Activated CD8-positive, alpha-beta T cell treated with anti-CD3 and anti-CD28 coated beads for 36 hours (primary cell): ENCODE measurements at regions of chr12 and their contacts with region 1.

Region 1: DNA sequence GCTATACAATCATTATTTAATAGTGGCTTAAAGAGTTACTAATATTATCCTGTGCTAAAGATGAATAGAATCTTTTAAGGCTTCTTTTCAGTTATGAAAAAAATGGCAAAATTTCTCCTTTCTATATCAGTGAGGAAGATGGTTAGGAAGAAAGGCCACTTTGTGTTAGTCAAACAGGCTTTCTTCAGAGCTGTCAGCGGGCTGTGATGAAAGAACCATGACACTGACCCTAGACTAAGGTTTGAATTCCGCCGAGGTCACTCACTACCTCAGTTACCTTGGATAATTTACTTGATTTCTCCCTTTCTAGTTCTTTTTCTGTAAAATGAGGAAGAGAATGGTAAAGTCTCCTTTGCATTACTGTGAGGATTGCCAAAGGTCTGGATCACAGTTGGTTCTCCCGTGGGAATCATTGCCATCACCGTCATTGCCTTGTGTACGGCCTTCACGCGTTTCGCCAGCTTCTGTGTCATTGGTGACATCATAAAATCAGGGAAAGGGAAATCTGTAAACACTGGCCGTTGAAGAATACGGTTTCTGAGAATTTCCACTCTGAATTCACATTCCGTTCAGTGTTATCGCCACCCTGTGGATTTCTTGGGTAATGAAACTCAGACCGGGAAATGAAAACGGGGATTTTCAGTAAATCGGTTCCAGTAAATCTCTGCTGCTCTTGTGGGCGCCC is 26.7 kb upstream of the YBX3 start:
- DNase-seq: peak; percentile 85
- ATAC-seq: peak; percentile 99
- H3K4me3 Mint-ChIP-seq: peak overlapping the region; percentile 67
- H3K27ac Mint-ChIP-seq: peak overlapping the region; percentile 22
- H3K4me1 Mint-ChIP-seq: peaks cover 8% of the 10 kb centered on the region
- H3K27me3 Mint-ChIP-seq: peaks cover 28% of the 10 kb centered on the region
- CTCF ChIP-seq: peak; percentile 95

Region 2: GRCh38 chr12:10613349-10614055 is 136.3 kb before region 1 on chr12 and contains the start of gene MAGOHB:
- CTCF ChIA-PET with region 1: interaction called, 11 read pairs
- POLR2A ChIA-PET with region 1: interaction called, 3 read pairs
- intact Hi-C with region 1: no loop called
- DNase-seq: peak; percentile 99
- ATAC-seq: peak; percentile 97
- H3K4me3 Mint-ChIP-seq: peak within 1 kb of the TSS; percentile 100
- H3K27ac Mint-ChIP-seq: peak within 1 kb of the TSS; percentile 100
- H3K4me1 Mint-ChIP-seq: peaks cover 30% of the 10 kb centered on the region
- H3K27me3 Mint-ChIP-seq: peaks cover 2% of the 10 kb centered on the region
- CTCF ChIP-seq: no peak
- total RNA-seq, gene MAGOHB: 80.4 to 85.6 TPM

Region 3: DNA sequence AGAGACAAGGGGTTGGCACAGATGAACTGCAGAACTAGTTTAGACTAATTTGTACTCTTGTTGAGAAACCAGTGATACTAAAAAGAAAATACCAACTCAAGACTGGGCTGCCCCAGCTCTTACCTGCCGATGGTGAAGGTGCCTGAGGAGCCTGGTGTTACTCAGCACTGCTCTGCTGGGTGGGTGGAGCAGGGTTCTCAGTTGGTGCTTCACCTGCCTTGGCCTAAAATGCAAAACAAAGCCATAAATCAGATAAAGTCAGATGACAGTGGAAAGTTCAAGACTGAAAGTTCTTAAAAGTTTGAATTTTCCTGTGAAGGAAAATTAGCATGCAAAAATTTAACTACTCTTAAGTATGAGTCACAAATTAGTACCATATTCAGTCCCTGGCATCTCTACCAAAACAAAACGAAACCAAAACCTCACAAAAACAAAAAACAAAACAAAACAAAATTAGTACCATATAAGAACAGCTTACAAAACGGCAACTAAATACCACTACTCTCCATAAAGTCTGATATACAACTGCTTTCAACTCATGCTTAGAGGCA is 48.6 kb before region 1 on chr12:
- CTCF ChIA-PET with region 1: interaction called, 19 read pairs
- POLR2A ChIA-PET with region 1: no interaction called
- intact Hi-C with region 1: no loop called
- DNase-seq: peak; percentile 55
- ATAC-seq: peak; percentile 91
- H3K4me3 Mint-ChIP-seq: no peak overlapping the region
- H3K27ac Mint-ChIP-seq: peak overlapping the region; percentile 91
- H3K4me1 Mint-ChIP-seq: peaks cover 16% of the 10 kb centered on the region
- H3K27me3 Mint-ChIP-seq: no peaks in the 10 kb centered on the region
- CTCF ChIP-seq: no peak

Region 4: DNA sequence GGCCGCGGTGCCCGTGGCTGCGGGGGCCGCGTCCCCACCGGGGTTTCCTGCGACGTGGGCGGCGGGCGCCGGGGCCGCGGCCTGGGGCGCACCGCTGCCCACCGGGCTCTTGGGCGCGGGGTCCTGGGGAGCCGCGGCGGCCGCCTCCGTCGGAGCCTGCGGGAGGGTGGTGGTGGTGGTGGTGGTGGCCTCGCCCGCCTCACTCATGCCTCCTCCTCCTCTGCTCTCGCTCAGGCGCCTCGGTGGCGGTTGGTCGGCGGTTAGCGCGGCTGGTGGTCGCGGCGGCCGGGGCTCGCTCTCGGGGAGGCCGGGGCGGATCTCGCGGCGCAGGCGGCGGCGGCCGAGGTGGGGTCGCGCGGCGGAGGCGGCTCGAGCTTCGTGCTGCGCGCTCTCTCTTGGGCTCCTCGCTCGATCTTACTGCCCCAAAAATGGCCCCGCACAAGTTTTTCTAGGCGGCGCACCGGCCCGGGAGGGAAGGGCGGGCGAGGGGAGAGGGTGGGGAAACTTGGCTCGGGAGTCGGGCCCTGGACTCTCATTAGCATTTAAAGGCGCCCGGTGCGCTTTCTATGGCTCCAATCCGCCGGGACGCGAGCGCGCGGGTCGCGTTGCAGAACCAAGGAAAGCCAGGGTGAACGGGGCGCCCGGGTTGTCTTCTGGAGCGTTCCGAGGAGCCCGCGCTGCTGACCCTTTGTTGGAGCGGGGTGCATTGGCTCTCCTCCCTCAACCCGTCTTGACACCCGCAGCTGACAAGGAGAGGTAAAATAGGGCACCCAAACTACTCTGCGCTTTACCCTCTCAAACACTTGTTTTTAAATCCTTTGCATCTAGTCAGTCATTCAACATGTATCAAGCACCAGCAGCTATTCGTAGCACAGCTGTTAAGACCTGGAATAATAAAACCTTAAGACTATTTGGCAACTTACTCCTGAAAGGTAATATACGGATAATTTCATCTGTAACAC is 26.7 kb before region 1 on chr12 and contains the start of gene YBX3:
- CTCF ChIA-PET with region 1: interaction called, 28 read pairs
- POLR2A ChIA-PET with region 1: interaction called, 8 read pairs
- intact Hi-C with region 1: no loop called
- DNase-seq: peak; percentile 73
- ATAC-seq: peak; percentile 32
- H3K4me3 Mint-ChIP-seq: peak within 1 kb of the TSS; percentile 98
- H3K27ac Mint-ChIP-seq: peak within 1 kb of the TSS; percentile 99
- H3K4me1 Mint-ChIP-seq: peaks cover 38% of the 10 kb centered on the region
- H3K27me3 Mint-ChIP-seq: peaks cover 26% of the 10 kb centered on the region
- CTCF ChIP-seq: no peak
- total RNA-seq, gene YBX3: 258 to 273 TPM

Region 5: DNA sequence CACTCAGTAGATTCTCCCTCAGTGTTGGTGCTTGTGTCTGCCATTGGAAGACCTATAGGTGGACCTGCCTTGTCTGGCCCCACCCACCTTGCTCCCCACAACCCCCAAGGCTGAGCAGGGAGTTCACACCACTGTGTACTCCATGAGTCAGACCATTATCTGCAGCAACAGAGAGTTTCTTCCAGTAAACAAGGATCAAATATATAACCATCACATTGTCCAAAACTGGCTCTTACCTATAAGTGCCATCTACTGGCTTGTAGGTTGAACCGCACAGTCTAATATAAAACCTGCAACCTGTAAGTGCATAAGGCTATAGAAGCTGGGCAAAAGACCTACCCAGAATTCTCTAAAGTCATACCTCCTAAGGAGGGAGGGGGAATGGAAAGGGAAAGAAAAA is 151.6 kb after region 1 on chr12:
- CTCF ChIA-PET with region 1: no interaction called
- POLR2A ChIA-PET with region 1: no interaction called
- intact Hi-C with region 1: no loop called
- DNase-seq: no peak
- ATAC-seq: no peak
- H3K4me3 Mint-ChIP-seq: no peak overlapping the region
- H3K27ac Mint-ChIP-seq: no peak overlapping the region
- H3K4me1 Mint-ChIP-seq: no peaks in the 10 kb centered on the region
- H3K27me3 Mint-ChIP-seq: no peaks in the 10 kb centered on the region
- CTCF ChIP-seq: no peak

Region 6: DNA sequence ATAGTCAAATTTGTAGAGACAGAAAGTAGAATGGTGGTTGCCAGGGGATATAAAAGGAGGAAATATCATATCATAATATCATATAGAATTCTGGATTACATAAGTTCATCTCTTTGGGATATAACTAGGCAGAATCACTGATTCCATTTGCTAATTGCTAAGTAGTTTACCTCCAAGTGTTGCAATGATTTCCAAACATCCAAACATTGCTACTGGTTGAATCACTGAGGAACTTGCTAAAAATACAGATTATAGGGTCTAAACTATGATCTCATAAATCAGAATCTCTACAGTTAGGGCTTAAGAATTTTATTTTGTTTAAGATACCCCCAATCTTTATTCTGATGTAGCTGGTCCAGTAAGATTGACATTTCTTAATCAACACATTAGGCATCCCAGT is 453.0 kb after region 1 on chr12:
- CTCF ChIA-PET with region 1: interaction called, 10 read pairs
- POLR2A ChIA-PET with region 1: no interaction called
- intact Hi-C with region 1: no loop called
- DNase-seq: no peak
- ATAC-seq: no peak
- H3K4me3 Mint-ChIP-seq: no peak overlapping the region
- H3K27ac Mint-ChIP-seq: no peak overlapping the region
- H3K4me1 Mint-ChIP-seq: no peaks in the 10 kb centered on the region
- H3K27me3 Mint-ChIP-seq: no peaks in the 10 kb centered on the region
- CTCF ChIP-seq: no peak